ENCODE measurements at regions of chr11 and their contacts with region 1.

Region 1: DNA sequence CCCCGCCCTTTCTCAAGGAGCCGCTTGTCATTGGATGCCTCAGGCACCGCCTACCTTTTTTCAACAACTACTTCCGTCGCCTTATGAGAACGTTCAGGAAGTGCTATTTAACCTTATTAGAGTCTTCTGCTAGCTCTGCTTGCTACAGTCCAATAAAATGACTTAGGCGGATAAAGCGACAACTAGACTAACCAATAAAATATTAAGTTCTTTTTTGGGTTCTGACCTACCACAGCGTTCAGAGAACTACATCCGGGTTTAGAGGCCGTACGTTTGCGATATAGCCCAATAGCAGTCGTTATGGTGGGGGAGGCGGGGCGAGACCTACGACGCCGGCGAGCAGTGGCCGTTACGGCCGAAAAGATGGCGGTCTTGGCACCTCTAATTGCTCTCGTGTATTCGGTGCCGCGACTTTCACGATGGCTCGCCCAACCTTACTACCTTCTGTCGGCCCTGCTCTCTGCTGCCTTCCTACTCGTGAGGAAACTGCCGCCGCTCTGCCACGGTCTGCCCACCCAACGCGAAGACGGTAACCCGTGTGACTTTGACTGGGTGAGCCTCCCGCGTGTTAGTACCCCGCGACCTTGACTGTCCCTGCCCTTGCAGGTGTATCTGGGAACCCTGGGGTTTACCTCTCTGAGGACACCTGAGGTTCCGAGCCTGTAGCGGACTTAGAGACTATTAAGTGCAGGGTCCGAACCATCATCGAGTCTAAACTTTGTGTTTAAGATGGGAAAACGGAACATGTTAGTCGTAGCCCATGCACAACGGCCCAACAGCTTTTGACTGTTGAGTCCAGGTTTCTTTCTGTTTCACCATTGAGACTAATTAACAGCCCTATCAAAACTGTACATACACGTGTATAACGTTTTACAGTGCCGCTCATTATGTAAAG is at the start of gene TMX2:
- DNase-seq: peak; percentile 99
- ATAC-seq: peak; percentile 85
- H3K4me3 ChIP-seq: peak within 1 kb of the TSS; percentile 91 to 98
- H3K27ac ChIP-seq: peak within 1 kb of the TSS; percentile 86
- H3K4me1 ChIP-seq: peaks cover 18 to 22% of the 10 kb centered on the region in 2 experiments
- H3K27me3 ChIP-seq: no peaks in the 10 kb centered on the region
- CTCF ChIP-seq: no peak
- POLR2A ChIP-seq: peak; percentile 2
- RAD21 ChIP-seq: no peak
- total RNA-seq, gene TMX2: 93.9 TPM

Region 2: DNA sequence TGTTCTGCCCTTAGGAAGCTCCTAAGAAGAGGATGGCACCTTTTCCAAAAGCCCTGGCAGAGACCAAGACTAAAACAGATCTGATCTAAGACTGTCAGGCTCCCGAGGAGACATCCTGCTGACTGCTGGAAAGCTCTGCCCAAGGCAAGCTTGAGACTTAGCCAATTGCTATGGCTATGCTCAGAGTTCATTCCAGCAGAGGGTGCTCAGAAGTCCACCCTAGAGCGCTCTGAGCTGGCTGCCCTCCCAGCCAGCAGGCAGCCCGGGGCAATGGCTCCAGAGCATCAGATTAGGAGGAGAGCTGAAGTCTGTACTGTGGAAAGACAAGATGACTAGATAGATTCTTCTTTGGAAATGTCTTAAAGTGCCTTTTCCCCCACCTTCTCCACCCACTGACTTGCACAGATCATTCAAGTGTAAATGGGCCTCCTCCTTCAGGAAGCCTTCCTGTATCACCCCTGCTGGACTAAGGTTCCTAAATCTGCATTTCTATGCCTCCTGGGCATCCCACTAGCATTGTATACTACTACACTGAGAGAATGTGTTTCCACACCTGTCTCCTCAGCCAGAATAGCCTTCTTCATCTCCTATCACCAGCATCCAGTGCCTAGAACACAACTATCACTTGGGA is 507.3 kb before region 1 on chr11:
- CTCF ChIA-PET with region 1: no interaction called
- POLR2A ChIA-PET with region 1: no interaction called
- RAD21 ChIA-PET with region 1: no interaction called
- intact Hi-C with region 1: no loop called
- DNase-seq: no peak
- ATAC-seq: peak; percentile 61; the same call in 1 of the 2 replicates
- H3K4me3 ChIP-seq: no peak overlapping the region
- H3K27ac ChIP-seq: no peak overlapping the region
- H3K4me1 ChIP-seq: no peaks in the 10 kb centered on the region
- H3K27me3 ChIP-seq: peaks cover 44% of the 10 kb centered on the region
- CTCF ChIP-seq: no peak
- POLR2A ChIP-seq: no peak
- RAD21 ChIP-seq: no peak

Region 3: GRCh38 chr11:57530596-57531507 is 181.7 kb before region 1 on chr11 and contains the start of gene TIMM10:
- CTCF ChIA-PET with region 1: no interaction called
- POLR2A ChIA-PET with region 1: no interaction called
- RAD21 ChIA-PET with region 1: no interaction called
- intact Hi-C with region 1: loop called (anchors 1 kb)
- DNase-seq: peak; percentile 99
- ATAC-seq: peak; percentile 95
- H3K4me3 ChIP-seq: peak within 1 kb of the TSS; percentile 64 to 84
- H3K27ac ChIP-seq: peak within 1 kb of the TSS; percentile 61
- H3K4me1 ChIP-seq: peaks cover 16 to 17% of the 10 kb centered on the region in 2 experiments
- H3K27me3 ChIP-seq: no peaks in the 10 kb centered on the region
- CTCF ChIP-seq: no peak
- POLR2A ChIP-seq: peak; percentile 75
- RAD21 ChIP-seq: peak; percentile 16; the same call in 1 of the 2 replicates
- total RNA-seq, gene TIMM10: 65.6 TPM

Region 4: DNA sequence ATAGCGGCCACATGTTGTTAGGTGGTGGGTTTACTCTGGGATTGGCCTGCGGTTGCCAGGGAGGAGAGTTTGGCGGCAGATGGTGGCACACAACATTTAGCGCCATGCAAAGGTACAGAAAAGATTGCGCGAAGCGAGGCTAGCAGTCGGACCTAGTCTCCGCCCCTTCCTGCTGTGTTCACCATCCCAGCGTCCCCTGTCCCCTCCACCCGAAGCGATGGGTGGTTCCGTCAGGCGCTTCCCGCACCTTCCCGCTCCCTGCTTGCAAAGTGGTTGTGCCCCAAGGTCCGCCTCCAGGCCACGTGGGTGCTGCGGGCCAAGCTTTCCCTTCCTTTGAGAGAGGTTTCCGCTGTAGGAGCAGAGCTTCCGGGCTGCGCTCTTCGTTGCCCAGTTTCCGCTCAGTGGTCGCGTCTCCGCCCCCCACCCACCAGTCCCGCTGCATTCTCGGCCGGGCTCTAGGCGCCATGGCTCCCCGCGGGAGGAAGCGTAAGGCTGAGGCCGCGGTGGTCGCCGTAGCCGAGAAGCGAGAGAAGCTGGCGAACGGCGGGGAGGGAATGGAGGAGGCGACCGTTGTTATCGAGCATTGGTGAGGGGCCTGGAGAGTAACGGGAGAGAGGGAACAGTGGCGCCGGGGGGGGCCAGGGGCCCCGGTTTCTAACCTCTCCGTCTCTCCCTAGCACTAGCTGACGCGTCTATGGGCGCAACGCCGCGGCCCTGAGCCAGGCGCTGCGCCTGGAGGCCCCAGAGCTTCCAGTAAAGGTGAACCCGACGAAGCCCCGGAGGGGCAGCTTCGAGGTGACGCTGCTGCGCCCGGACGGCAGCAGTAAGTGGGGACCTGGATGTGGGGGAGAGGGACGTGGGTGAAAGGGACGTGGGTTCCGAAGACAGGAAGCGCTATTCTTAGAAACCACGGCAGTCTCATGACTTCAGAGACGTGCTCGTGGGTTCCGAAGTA is 28.9 kb after region 1 on chr11 and contains the start of gene SELENOH:
- CTCF ChIA-PET with region 1: no interaction called
- POLR2A ChIA-PET with region 1: interaction called, 6 read pairs
- RAD21 ChIA-PET with region 1: no interaction called
- intact Hi-C with region 1: loop called (anchors 1 kb)
- DNase-seq: peak; percentile 94
- ATAC-seq: peak; percentile 95
- H3K4me3 ChIP-seq: peak within 1 kb of the TSS; percentile 95 to 97
- H3K27ac ChIP-seq: peak within 1 kb of the TSS; percentile 76
- H3K4me1 ChIP-seq: peaks cover 0 to 17% of the 10 kb centered on the region in 2 experiments; a peak in 2 of 4 replicates
- H3K27me3 ChIP-seq: no peaks in the 10 kb centered on the region
- CTCF ChIP-seq: no peak
- POLR2A ChIP-seq: peak; percentile 62
- RAD21 ChIP-seq: no peak
- total RNA-seq, gene SELENOH: 194 TPM

Measured in HCT116 (cell line).